Breast epithelium (tissue), 4 donors: ENCODE measurements at regions of chr22 and their contacts with region 1.

Region 1: GRCh38 chr22:33321466-33321865 is 263.3 kb upstream of the SYN3 start:
- DNase-seq: no peak
- H3K4me3 ChIP-seq: no peak overlapping the region
- H3K27ac ChIP-seq: no peak overlapping the region
- H3K4me1 ChIP-seq: no peaks in the 10 kb centered on the region
- H3K27me3 ChIP-seq: no peaks in the 10 kb centered on the region
- CTCF ChIP-seq: no peak
- POLR2A ChIP-seq: no peak

Region 2: DNA sequence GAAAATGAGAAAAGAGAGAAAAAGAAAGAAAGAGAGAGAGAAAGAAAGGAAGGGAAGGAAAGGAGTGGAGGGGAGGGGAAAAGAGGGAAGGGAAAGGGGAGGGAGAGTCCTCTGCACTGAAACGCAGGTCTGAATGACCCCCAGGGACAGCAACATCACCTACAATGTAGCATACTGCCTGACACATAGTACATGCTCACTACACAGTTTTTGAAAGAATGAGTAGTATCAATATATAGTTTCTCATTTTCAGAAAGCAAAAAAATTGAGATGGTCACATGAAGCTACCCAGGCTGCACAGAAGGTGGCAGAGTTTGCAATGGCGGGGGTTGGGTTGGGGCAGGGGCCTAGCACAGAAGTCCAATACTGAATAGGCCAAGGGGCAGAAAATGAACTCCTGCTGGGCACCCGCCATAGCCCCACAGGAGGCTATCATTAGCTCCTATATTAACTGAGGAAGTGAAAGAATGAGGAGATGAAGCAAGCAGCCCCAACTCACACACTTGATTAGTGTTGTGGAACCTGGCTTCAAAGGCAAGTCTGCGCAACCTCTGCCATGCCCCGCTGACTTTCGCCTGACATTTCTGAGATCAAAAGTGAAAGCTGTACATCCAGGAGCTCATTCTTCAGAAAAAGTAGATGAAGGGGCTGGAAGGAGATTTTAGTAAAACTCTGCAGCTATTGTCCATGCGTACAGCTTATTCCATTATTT is 22.1 kb before region 1 on chr22:
- intact Hi-C with region 1: no loop called
- DNase-seq: no peak
- H3K4me3 ChIP-seq: no peak overlapping the region
- H3K27ac ChIP-seq: no peak overlapping the region
- H3K4me1 ChIP-seq: no peaks in the 10 kb centered on the region
- H3K27me3 ChIP-seq: no peaks in the 10 kb centered on the region
- CTCF ChIP-seq: no peak
- POLR2A ChIP-seq: no peak

Region 3: GRCh38 chr22:33350391-33350955 is 29.0 kb after region 1 on chr22:
- intact Hi-C with region 1: no loop called
- DNase-seq: no peak
- H3K4me3 ChIP-seq: no peak overlapping the region
- H3K27ac ChIP-seq: no peak overlapping the region
- H3K4me1 ChIP-seq: no peaks in the 10 kb centered on the region
- H3K27me3 ChIP-seq: no peaks in the 10 kb centered on the region
- CTCF ChIP-seq: no peak
- POLR2A ChIP-seq: no peak

Region 4: GRCh38 chr22:34102633-34103032 is 781.2 kb after region 1 on chr22:
- intact Hi-C with region 1: loop called (anchors 2 kb)
- DNase-seq: no peak
- H3K4me3 ChIP-seq: no peak overlapping the region
- H3K27ac ChIP-seq: no peak overlapping the region
- H3K4me1 ChIP-seq: no peaks in the 10 kb centered on the region
- H3K27me3 ChIP-seq: no peaks in the 10 kb centered on the region
- CTCF ChIP-seq: no peak
- POLR2A ChIP-seq: no peak

Region 5: DNA sequence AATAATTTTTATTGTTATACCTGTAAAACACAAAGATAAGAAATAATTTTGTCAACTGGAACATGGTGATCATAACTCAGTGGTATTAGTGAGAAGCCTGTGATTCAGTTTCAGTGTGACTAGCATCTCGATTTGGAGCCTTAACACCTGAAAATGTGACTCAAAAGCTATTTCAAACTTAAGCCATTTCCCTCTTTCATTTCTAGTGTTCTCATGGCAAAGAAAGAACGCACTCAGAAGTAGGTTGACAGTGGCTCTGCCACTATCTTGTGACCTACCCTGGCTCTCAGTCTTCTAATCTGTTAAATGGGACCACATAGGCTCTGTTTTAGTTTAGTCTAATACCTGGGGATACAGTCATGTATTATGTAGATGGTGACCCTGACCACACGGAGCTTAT is 1807.2 kb after region 1 on chr22:
- intact Hi-C with region 1: loop called (anchors 5 kb)
- DNase-seq: no peak
- H3K4me3 ChIP-seq: no peak overlapping the region
- H3K27ac ChIP-seq: no peak overlapping the region
- H3K4me1 ChIP-seq: no peaks in the 10 kb centered on the region
- H3K27me3 ChIP-seq: peaks cover 0 to 14% of the 10 kb centered on the region in 2 donors
- CTCF ChIP-seq: no peak
- POLR2A ChIP-seq: no peak